Head of caudate nucleus (tissue), 42 donors: ENCODE measurements at regions of chr2 and their contacts with region 1.

Region 1: GRCh38 chr2:54330162-54330925 is 74.3 kb upstream of the TSPYL6 start:
- DNase-seq: peak; percentile 91 to 99 (median 97)

Region 2: GRCh38 chr2:54115284-54116137 is 214.8 kb before region 1 on chr2 and contains the start of gene ACYP2:
- intact Hi-C with region 1: loop called (anchors 10 kb)
- DNase-seq: peak; percentile 85 to 98 (median 95)

Region 3: DNA sequence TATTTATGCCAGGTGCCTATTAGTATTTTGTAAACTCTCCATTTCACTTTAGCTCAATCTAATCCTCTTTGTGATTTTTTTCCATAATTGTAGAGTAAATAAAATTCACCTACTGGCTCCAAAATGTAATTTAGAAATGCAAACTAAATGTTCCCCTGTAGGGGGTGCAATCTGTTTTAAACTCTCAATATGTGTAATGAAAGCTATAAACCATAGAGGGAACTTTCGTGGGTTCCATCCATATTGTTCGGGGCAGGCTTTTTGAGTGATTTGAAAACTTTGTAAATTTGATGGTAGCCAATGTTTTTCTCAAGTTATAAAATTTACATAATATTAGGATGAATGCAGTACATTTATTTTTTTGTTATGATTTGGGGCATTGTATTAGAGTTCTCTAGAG is 123.7 kb before region 1 on chr2:
- intact Hi-C with region 1: loop called (anchors 5 kb)
- DNase-seq: peak in 5 of 42 donors; percentile 13 to 50 (median 21)

Region 4: GRCh38 chr2:54287532-54287931 is 42.8 kb before region 1 on chr2:
- intact Hi-C with region 1: no loop called
- DNase-seq: no peak

Region 5: DNA sequence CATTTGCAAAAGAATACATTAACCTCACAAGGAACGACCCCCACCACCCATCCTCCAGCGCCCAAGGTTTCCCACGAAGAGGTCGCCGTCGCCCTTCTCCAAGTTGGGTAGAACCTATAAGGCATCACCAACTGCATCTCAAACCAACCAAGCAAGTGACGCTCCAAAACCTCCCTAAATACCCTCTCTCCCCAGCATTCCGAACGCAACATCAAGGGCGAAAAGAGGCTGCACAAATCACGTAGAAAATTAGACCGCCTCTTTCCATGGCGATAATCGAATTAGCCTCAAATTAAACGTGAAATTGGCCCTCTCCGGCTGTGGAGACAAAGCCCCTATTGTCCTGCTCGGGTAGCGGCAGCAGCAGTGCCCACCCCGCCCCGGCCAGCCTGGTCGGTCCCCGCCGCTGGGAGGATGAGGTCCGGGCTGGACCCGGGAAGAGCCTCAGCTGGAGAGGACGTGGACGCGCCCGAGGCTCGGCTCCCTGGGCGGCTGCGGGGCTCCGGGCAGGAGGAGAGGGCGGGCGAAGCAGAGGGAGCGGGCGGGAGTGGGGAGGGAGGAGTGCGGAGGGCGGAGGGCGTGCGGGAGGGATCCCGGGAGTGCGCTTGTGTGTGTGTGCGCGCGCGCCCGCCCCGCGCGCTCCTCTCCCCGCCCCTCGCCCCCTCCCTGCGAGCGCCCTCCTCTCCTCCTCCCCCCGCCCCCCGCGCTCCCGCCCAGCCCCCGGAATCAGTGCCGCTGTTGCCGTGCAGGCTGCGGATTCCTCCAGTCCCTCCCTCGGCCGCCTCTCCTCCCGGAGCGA is 125.4 kb after region 1 on chr2 and contains the start of gene SPTBN1:
- intact Hi-C with region 1: loop called (anchors 5 kb)
- DNase-seq: peak; percentile 83 to 98 (median 95)